ENCODE measurements at regions of chr2 and their contacts with region 1.

Region 1: GRCh38 chr2:158903711-158904443 is 64.6 kb upstream of the TANC1 start:
- DNase-seq: no peak
- H3K4me3 ChIP-seq: no peak overlapping the region
- H3K27ac ChIP-seq: no peak overlapping the region
- H3K4me1 ChIP-seq: no peaks in the 10 kb centered on the region
- H3K27me3 ChIP-seq: no peaks in the 10 kb centered on the region
- CTCF ChIP-seq: no peak
- POLR2A ChIP-seq: no peak

Region 2: GRCh38 chr2:158923180-158923594 is 19.3 kb after region 1 on chr2:
- intact Hi-C with region 1: no loop called
- DNase-seq: no peak
- H3K4me3 ChIP-seq: no peak overlapping the region
- H3K27ac ChIP-seq: no peak overlapping the region
- H3K4me1 ChIP-seq: no peaks in the 10 kb centered on the region
- H3K27me3 ChIP-seq: no peaks in the 10 kb centered on the region
- CTCF ChIP-seq: no peak
- POLR2A ChIP-seq: no peak

Region 3: GRCh38 chr2:159111346-159111924 is 207.6 kb after region 1 on chr2:
- intact Hi-C with region 1: loop called (anchors 5 kb)
- DNase-seq: peak in 1 of 2 donors; percentile 61
- H3K4me3 ChIP-seq: no peak overlapping the region
- H3K27ac ChIP-seq: peak overlapping the region; percentile 29 to 48
- H3K4me1 ChIP-seq: peaks cover 0 to 8% of the 10 kb centered on the region in 2 donors
- H3K27me3 ChIP-seq: no peaks in the 10 kb centered on the region
- CTCF ChIP-seq: no peak
- POLR2A ChIP-seq: no peak

Region 4: DNA sequence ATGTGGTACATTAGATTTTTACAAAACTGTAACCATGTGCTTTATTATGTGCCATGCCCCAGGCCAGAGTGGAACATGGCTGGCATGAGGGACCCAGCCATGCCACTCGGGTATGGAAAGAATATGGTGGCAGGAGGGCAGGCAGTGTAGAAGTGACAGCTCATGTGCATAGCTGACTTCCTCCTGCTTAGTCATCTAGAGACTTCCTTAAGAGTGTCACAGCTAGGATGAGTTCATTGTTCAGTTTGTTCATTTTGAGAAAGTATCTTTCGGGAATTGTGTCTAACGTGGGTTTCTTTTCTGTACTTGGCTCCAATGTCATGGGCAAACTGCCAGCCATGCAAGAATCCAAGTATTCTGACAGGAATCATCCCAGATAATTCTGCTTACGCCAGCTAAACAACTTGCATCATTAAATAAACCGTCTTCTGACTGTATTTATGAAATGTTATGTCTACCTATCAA is 1390.5 kb after region 1 on chr2:
- intact Hi-C with region 1: no loop called
- DNase-seq: no peak
- H3K4me3 ChIP-seq: no peak overlapping the region
- H3K27ac ChIP-seq: peak overlapping the region; percentile 78 to 81
- H3K4me1 ChIP-seq: no peaks in the 10 kb centered on the region
- H3K27me3 ChIP-seq: no peaks in the 10 kb centered on the region
- CTCF ChIP-seq: no peak
- POLR2A ChIP-seq: no peak

Measured in breast epithelium (tissue), 4 donors.